IMR-90 (cell line): ENCODE measurements at regions of chr9 and their contacts with region 1.

Region 1: DNA sequence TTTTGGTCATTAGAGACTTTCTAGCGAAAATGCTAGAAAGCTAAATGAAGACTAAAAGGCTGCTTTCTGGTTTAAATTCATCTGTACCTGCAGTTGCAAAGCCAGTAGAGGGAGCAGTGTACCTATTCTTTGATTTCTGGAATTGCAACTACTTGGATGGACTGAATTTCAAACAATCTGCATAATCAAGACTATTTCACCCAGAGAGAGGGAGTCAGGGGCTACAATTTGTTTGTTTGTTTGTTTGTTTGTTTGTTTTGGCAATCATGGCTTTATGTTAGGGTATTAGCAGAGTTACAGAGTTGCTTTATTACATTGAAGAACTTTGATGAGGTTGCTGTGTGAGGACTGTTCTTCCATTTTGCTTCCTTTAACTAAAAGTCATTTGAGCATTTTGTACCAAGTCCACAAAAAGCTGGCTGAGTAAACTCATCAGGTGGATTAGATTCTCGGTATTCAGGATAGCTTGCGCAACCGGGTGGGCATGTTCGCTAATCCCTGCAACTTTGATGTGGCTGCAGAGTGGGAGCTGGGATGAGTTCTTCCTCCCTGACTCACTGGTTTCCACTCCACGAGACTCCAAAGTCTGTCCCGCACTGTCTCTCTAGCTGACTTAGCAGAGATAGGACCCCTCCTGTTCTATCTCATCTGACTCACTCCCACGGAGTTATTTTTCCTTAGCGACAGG is 80.0 kb upstream of the TUT7 start:
- DNase-seq: peak; percentile 79
- ATAC-seq: peak; percentile 93
- H3K4me3 ChIP-seq: no peak overlapping the region; the same call in 1 of the 2 replicates
- H3K27ac ChIP-seq: peak overlapping the region; percentile 21; the same call in 1 of the 2 replicates
- H3K4me1 ChIP-seq: no peaks in the 10 kb centered on the region
- H3K27me3 ChIP-seq: no peaks in the 10 kb centered on the region
- CTCF ChIP-seq: peak; percentile 89
- POLR2A ChIP-seq: no peak
- RAD21 ChIP-seq: peak; percentile 84

Region 2: DNA sequence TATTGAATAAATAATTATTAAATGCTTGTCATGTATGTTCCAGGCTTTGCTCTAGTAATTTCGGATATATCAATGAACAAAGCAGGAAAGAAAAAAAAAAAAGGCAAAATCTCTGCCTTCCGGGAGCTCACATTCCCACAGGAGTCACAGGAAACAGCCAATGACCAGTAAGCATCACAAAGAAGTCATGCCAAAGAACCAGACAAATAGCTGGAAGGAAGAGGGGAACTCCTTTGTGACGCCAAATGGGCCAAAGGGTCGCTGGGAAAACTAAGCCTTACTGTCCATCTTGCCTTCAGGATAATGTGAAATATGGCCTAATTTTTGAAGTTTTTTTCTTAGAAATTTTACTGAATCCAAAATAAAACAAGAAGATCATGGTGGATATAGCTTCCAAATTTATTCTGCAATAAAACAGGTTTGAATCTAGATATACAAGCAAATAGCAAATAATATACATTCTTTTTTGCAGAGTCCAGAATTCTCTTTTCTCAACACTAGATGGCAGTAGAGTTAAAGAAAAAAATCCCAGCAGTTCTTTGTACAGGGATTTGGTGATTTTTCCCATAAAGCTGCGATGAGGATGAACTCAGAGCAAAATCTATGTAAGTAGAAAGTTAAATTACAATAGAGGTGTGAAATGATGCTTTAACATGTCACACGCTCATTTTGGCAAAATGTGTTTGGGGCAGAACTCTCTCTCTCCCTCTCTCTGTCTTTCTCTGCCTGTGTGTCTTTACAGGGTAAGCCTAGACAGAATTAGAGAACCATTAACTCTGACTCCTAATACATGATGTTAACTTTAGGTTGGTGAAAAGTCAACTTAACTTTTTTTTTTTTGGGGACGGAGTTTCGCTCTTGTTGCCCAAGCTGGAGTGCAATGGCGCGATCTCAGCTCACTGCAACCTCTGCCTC is 20.0 kb before region 1 on chr9:
- CTCF ChIA-PET with region 1: interaction called, 20 read pairs
- POLR2A ChIA-PET with region 1: no interaction called
- dilution Hi-C with region 1: no loop called
- in situ Hi-C with region 1: no loop called
- intact Hi-C with region 1: no loop called
- DNase-seq: peak; percentile 50
- ATAC-seq: peak; percentile 80
- H3K4me3 ChIP-seq: no peak overlapping the region
- H3K27ac ChIP-seq: no peak overlapping the region
- H3K4me1 ChIP-seq: peaks cover 2% of the 10 kb centered on the region
- H3K27me3 ChIP-seq: no peaks in the 10 kb centered on the region
- CTCF ChIP-seq: peak; percentile 70
- POLR2A ChIP-seq: no peak
- RAD21 ChIP-seq: peak; percentile 70

Region 3: GRCh38 chr9:86470326-86470725 is 36.1 kb after region 1 on chr9:
- CTCF ChIA-PET with region 1: interaction called, 4 read pairs
- POLR2A ChIA-PET with region 1: no interaction called
- dilution Hi-C with region 1: no loop called
- in situ Hi-C with region 1: no loop called
- intact Hi-C with region 1: loop called (anchors 2 kb)
- DNase-seq: peak; percentile 19
- ATAC-seq: peak; percentile 44
- H3K4me3 ChIP-seq: no peak overlapping the region
- H3K27ac ChIP-seq: no peak overlapping the region
- H3K4me1 ChIP-seq: no peaks in the 10 kb centered on the region
- H3K27me3 ChIP-seq: no peaks in the 10 kb centered on the region
- CTCF ChIP-seq: no peak
- POLR2A ChIP-seq: no peak
- RAD21 ChIP-seq: no peak

Region 4: GRCh38 chr9:87662808-87663528 is 1228.8 kb after region 1 on chr9:
- CTCF ChIA-PET with region 1: interaction called, 4 read pairs
- POLR2A ChIA-PET with region 1: no interaction called
- dilution Hi-C with region 1: no loop called
- in situ Hi-C with region 1: no loop called
- intact Hi-C with region 1: loop called (anchors 5 kb)
- DNase-seq: peak; percentile 44
- ATAC-seq: peak; percentile 91
- H3K4me3 ChIP-seq: no peak overlapping the region
- H3K27ac ChIP-seq: no peak overlapping the region
- H3K4me1 ChIP-seq: no peaks in the 10 kb centered on the region
- H3K27me3 ChIP-seq: no peaks in the 10 kb centered on the region; the same call in 1 of the 2 replicates
- CTCF ChIP-seq: peak; percentile 77
- POLR2A ChIP-seq: no peak
- RAD21 ChIP-seq: peak; percentile 85